AG04449 (cell line): ENCODE measurements at regions of chr1 and their contacts with region 1.

Region 1: DNA sequence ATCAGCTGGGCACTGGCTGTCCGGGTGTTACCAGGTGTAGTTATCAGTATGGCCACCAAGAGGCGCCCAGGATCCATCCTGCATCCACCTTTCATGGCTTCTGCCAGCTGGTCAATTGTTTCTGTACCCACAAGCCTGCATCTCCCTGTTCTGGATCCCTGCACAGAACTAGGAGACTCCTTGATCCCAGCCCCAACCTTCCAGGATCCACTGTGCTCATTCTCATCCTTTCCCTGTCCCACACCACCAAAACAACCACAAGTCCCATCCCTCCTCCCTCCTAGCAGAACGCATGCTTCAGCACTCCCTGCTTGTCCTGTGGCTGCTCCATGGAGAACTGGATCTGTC is 27.2 kb upstream of the FOXE3 start:
- DNase-seq: no peak
- H3K4me3 ChIP-seq: no peak overlapping the region
- CTCF ChIP-seq: peak; percentile 84

Region 2: GRCh38 chr1:47371016-47371517 is 17.8 kb before region 1 on chr1:
- CTCF ChIA-PET with region 1: interaction called, 20 read pairs
- POLR2A ChIA-PET with region 1: no interaction called
- DNase-seq: no peak
- H3K4me3 ChIP-seq: no peak overlapping the region
- CTCF ChIP-seq: no peak

Region 3: DNA sequence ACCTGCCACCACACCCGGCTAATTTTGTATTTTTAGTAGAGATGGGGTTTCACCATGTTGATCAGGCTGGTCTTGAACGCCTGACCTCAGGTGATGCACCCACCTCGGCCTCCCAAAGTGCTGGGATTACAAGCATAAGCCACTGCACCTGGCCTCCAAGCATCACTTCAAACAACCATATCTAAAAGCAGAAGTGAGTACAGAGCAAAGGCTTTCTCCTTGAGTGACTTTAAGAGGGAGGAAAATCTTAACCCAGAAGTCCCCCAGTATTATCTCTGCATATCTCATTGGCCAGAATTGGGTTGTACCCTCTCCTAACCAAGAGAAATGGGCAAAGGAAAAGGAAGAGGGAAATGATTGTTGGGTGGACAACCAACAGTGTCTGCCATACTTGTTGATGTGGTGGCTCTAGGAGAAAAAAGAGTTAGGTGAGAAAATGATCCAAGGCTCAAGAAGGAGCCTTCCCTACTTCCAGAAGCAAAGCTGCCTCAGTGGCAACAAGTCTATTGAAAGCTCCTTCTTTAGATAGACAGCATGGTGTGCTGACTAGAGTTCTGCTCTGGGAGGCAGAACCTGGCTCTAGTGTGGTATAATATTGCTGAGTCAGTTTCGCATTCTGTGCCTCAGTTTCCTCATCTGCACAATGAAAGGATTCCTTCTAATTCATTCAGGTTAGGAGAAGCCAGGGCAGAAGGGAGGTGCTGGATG is 10.4 kb after region 1 on chr1:
- CTCF ChIA-PET with region 1: interaction called, 57 read pairs
- POLR2A ChIA-PET with region 1: no interaction called
- DNase-seq: no peak
- H3K4me3 ChIP-seq: no peak overlapping the region
- CTCF ChIP-seq: no peak

Region 4: DNA sequence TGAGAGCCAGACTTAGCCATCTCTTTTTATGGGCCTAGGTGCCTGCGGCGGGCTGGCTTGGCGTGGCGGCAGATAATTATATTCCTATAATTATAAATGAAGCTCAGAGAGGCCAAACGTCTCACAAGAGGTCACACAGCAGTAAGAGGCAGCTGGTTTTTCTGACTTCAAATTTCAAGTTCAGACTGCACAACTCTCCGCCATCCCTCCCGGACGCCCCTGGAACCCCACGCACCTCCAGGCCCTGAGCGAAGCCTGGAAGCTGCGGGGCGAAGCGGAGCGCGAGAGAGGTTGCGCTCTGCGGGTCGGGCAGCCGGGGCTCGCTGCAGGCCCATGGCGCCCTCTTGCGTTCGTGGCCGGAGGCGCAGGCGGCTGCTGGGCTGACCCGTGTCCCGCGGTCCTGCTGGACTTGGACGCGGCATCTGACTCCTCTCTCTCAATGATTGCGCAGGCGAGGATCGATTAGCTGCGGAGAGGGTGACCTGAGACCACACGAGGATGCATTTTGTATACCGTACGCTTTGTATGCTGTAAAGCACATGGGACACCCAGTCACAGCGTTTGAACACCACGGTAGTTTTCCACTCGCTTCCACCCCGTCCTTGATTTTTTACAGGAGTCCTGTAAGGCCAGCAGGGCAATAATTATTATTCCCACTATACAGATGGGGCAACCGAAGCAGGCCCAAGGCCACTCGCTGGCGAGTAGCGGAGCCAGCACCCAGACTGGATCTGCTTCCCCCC is 321.6 kb after region 1 on chr1:
- CTCF ChIA-PET with region 1: interaction called, 39 read pairs
- POLR2A ChIA-PET with region 1: no interaction called
- DNase-seq: no peak
- H3K4me3 ChIP-seq: no peak overlapping the region
- CTCF ChIP-seq: peak; percentile 99